Heart right ventricle (tissue), 16 donors: ENCODE measurements at regions of chr2 and their contacts with region 1.

Region 1: GRCh38 chr2:217521820-217522219 is 481.0 kb downstream of the TNS1 start:
- DNase-seq: no peak
- ATAC-seq: peak in 3 of 8 donors; percentile 14 to 54 (median 27)
- H3K4me3 ChIP-seq: no peak overlapping the region
- H3K27ac ChIP-seq: no peak overlapping the region
- H3K4me1 ChIP-seq: peaks cover 0 to 15% (median 8%) of the 10 kb centered on the region in 9 donors
- H3K27me3 ChIP-seq: no peaks in the 10 kb centered on the region
- CTCF ChIP-seq: no peak

Region 2: GRCh38 chr2:217482056-217482710 is 39.6 kb before region 1 on chr2:
- intact Hi-C with region 1: no loop called
- DNase-seq: no peak
- ATAC-seq: no peak
- H3K4me3 ChIP-seq: no peak overlapping the region
- H3K27ac ChIP-seq: no peak overlapping the region
- H3K4me1 ChIP-seq: peaks cover 0 to 7% (median 0%) of the 10 kb centered on the region in 9 donors
- H3K27me3 ChIP-seq: no peaks in the 10 kb centered on the region
- CTCF ChIP-seq: no peak

Region 3: GRCh38 chr2:217632043-217632442 is 110.2 kb after region 1 on chr2:
- intact Hi-C with region 1: loop called in 1 of 10 experiments (anchors 10 kb)
- DNase-seq: no peak
- ATAC-seq: peak in 7 of 8 donors; percentile 30 to 83 (median 50)
- H3K4me3 ChIP-seq: no peak overlapping the region
- H3K27ac ChIP-seq: peak overlapping the region in 4 of 10 donors; percentile 9 to 51 (median 26)
- H3K4me1 ChIP-seq: peaks cover under 1 to 52% (median 22%) of the 10 kb centered on the region in 9 donors
- H3K27me3 ChIP-seq: no peaks in the 10 kb centered on the region
- CTCF ChIP-seq: no peak

Region 4: DNA sequence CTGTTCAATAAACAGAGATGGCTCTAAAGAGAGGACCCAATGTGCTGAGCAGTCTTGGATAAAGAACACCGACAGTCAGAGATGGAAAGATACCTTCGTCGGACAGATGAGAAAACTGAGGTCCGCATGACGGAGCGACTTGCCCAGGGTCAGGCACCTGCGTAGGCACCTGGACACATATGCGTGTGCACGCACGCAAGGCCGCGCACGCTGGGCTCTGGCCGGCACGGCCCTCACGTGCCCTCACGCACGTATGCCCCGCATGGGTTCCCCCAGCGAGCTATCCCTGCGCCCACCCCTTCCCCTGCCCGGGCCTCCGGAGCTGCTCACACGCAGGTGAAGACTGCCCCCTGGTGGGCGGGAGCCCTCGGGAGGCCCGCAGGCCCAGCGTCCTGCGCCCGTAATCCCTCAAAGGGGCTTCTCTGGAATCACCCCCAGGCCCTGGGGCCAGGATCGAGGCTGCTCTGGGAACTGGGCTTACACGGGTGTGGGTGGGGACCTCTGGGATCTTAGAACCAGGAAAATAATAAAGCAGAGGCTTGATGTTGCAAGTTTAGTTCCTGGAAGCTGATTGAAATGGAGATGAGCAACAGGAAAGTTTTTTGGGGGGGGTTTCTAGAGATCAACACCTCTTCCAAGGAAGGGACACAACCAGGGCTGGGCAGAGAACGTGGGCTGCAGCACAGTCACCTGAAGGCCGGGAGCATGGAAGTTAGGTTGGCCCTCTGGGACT is 234.7 kb after region 1 on chr2:
- intact Hi-C with region 1: loop called in 2 of 10 experiments (anchors 5 to 10 kb)
- DNase-seq: peak; percentile 72 to 78
- ATAC-seq: peak; percentile 75 to 91 (median 88)
- H3K4me3 ChIP-seq: peak overlapping the region in 6 of 10 donors; percentile 9 to 40 (median 31)
- H3K27ac ChIP-seq: no peak overlapping the region
- H3K4me1 ChIP-seq: peaks cover 5 to 22% (median 10%) of the 10 kb centered on the region in 9 donors
- H3K27me3 ChIP-seq: peaks cover 0 to 8% (median 0%) of the 10 kb centered on the region in 7 donors
- CTCF ChIP-seq: peak; percentile 90 to 99 (median 94)